ENCODE measurements at regions of chr2 and their contacts with region 1.

Region 1: GRCh38 chr2:191625016-191625415 is 52.9 kb upstream of the NABP1 start:
- DNase-seq: peak; percentile 60
- H3K4me3 ChIP-seq: no peak overlapping the region
- H3K27ac ChIP-seq: no peak overlapping the region
- H3K4me1 ChIP-seq: peaks cover 22% of the 10 kb centered on the region
- CTCF ChIP-seq: no peak

Region 2: GRCh38 chr2:191150600-191151330 is 474.3 kb before region 1 on chr2 and contains the start of gene STAT4:
- CTCF ChIA-PET with region 1: no interaction called
- POLR2A ChIA-PET with region 1: no interaction called
- intact Hi-C with region 1: no loop called
- DNase-seq: no peak
- H3K4me3 ChIP-seq: no peak within 1 kb of the TSS
- H3K27ac ChIP-seq: no peak within 1 kb of the TSS
- H3K4me1 ChIP-seq: no peaks in the 10 kb centered on the region
- CTCF ChIP-seq: no peak
- total RNA-seq, gene STAT4: not detected in 2 replicates

Region 3: GRCh38 chr2:191441496-191442214 is 183.4 kb before region 1 on chr2:
- CTCF ChIA-PET with region 1: no interaction called
- POLR2A ChIA-PET with region 1: no interaction called
- intact Hi-C with region 1: no loop called
- DNase-seq: no peak
- H3K4me3 ChIP-seq: no peak overlapping the region
- H3K27ac ChIP-seq: no peak overlapping the region
- H3K4me1 ChIP-seq: no peaks in the 10 kb centered on the region
- CTCF ChIP-seq: no peak

Region 4: DNA sequence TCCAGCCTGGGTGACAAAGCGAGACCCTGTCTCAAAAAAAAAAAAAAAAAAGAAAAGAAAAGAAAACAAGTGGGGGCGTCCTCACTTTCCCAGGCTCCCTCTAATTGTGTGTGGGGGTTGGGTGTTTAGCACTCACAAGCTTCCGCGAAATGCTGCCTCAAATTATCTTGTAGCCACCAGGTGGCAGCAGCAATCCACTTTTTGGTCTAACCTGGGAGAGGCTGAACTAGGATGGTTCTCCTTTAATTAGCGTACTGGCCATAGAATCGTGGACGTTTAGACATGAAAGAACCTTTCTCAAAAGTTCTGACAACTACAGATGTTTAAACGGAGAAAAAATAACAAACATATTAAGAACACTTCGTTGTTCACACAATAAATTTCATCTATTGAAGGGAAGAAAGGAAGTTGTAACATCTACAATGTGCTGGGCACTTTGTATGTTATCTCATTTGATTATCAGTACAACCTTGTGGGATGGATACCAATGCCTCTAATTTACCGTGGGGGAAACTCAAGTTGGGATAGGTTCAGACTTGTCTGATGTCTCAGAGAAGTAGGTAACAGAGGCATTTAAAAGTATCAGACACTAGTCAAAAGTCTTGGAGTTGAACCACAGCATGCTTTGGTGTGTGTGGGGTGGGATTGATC is 69.8 kb before region 1 on chr2:
- CTCF ChIA-PET with region 1: no interaction called
- POLR2A ChIA-PET with region 1: no interaction called
- intact Hi-C with region 1: no loop called
- DNase-seq: peak; percentile 75
- H3K4me3 ChIP-seq: no peak overlapping the region
- H3K27ac ChIP-seq: no peak overlapping the region
- H3K4me1 ChIP-seq: no peaks in the 10 kb centered on the region
- CTCF ChIP-seq: peak; percentile 86

Region 5: DNA sequence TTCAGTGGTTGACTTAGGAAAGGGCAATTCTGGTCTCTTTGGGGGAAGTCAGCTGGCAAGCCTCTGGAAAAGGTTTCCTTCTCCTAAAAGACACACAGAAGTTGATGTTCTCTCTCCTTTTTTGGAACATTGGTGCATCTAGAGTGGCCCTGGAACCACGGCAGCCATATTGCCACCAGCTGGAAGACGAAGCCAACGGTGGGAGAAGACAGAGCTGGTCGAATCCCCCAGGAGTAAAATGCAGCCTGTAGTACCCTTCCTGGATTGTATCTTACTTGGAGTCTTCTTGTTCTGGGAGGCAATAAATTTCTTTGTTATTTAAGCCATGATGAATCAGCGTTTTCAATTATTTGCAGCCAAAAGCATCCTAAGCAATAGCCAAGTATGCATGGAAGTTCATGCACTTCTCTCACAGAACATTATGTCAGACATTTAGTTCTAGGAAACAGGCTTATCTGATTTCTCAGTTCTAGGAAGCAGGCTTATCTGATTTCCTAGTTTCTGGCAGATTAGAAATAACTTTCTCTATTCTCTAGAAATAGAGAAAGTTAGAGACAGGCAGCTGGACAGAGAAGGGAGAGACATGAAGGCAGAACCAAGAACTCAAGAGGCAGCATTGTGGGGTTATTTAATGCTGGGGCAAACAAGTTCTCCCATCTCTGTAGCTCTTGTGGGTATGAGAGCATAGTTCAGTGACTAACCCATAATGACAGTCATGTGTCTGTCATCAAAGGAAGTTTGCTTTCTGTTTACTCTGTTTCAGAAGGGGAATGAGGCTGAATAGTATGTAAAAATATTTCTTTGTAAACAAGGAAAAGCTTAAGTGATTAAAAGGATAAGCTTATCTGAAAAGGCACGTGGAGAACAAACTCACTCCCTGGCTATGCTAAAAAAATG is 12.4 kb after region 1 on chr2:
- CTCF ChIA-PET with region 1: interaction called, 3 read pairs
- POLR2A ChIA-PET with region 1: interaction called, 15 read pairs
- intact Hi-C with region 1: no loop called
- DNase-seq: no peak
- H3K4me3 ChIP-seq: no peak overlapping the region
- H3K27ac ChIP-seq: no peak overlapping the region
- H3K4me1 ChIP-seq: no peaks in the 10 kb centered on the region
- CTCF ChIP-seq: no peak

Region 6: DNA sequence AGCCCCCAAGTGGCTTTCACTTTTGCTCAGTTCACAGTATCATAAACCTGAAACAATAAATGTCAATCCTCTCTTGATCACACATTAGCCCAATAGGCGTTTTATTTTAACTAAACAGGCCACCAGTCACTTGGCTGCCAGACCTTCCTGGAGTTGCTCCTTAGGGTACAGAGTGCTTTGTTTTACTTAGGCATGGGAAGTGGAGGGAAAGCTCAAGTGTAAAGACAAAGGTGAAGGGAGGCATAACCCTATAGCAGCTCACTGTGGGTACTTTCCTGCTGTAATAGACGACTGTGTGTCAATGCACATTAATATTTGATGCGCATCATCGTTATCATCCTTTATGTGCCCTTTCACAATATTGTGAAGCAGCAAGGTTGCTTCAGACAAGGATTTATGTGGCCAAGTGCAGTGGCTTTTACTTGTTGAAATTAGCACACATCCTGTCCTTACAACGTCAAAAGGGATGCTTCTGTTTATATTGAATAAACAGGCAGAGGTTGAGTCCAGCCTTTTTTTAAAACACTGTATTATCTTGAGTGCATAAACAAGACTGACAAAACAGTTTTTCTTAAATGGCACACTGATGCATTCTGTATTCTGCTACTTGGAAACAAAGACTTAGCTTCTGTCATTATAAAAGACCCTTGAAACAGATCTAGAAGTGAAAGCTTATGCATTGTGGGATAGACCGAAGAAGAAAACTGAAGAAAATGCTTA is 401.2 kb after region 1 on chr2:
- CTCF ChIA-PET with region 1: no interaction called
- POLR2A ChIA-PET with region 1: no interaction called
- intact Hi-C with region 1: no loop called
- DNase-seq: no peak
- H3K4me3 ChIP-seq: no peak overlapping the region
- H3K27ac ChIP-seq: no peak overlapping the region
- H3K4me1 ChIP-seq: no peaks in the 10 kb centered on the region
- CTCF ChIP-seq: no peak